CD4-positive, alpha-beta memory T cell (primary cell): ENCODE measurements at regions of chr6 and their contacts with region 1.

Region 1: DNA sequence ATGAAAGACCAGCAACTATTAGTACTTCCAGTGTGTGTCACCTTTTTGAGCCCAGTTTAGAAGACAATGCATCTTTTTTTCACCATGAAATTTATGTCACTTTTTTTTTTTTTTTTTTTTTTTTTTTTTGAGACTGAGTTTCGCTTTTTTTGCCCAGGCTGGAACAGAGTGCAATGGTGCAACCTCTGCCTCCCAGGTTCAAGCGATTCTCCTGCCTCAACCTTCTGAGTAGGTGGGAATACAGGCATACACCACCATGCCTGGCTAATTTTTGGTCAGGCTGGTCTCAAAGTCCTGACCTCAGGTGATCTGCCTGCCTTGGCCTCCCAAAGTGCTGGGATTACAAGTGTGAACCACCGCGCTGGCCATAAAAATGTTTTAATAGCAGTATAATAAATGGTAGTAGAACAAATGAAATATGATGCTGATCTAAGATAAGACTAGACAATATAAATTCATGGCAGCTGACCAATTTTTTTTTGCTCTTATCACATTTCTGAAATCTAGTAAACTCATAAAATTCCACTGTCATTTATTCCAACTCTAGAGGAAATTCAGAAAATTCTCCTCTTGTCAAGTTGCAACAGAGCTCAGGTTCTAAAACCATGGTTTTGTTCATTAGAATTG is 21.3 kb downstream of the NHSL1 start:
- DNase-seq: no peak
- H3K4me3 ChIP-seq: no peak overlapping the region
- H3K4me3 Mint-ChIP-seq: no peak overlapping the region
- H3K27ac ChIP-seq: no peak overlapping the region
- H3K27ac Mint-ChIP-seq: no peak overlapping the region
- H3K4me1 ChIP-seq: no peaks in the 10 kb centered on the region
- H3K4me1 Mint-ChIP-seq: no peaks in the 10 kb centered on the region
- H3K27me3 ChIP-seq: no peaks in the 10 kb centered on the region
- H3K27me3 Mint-ChIP-seq: no peaks in the 10 kb centered on the region

Region 2: DNA sequence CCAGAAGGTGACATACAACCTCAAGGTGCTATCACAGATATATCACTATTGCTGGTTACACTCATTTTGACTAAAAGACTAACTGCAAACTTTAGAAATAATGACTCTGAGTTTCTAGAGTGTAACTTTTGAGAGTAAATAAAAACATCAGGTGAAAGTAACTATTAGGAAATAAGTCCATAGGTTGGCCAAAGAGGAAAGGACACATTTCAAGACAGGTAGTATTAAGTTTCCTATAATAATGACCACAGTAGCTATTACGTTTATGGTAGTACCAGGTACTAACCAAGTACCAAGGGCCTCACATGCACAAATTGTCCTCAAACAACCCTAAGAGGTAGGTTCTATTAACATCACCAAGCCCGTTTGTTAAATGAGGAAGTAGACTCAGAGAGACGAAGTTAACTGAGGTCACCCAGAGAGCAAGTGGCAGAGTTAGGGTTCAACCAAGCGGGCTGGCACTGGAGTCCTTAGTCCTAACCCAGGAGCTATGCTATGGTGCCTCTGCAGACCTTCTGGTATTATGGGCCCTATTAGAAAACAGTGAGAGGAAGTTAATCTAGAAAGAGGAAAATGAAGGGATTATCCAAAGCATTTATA is 37.2 kb before region 1 on chr6:
- CTCF ChIA-PET with region 1: interaction called, 3 read pairs
- POLR2A ChIA-PET with region 1: no interaction called
- intact Hi-C with region 1: loop called (anchors 5 kb)
- DNase-seq: no peak
- H3K4me3 ChIP-seq: no peak overlapping the region
- H3K4me3 Mint-ChIP-seq: no peak overlapping the region
- H3K27ac ChIP-seq: no peak overlapping the region
- H3K27ac Mint-ChIP-seq: no peak overlapping the region
- H3K4me1 ChIP-seq: no peaks in the 10 kb centered on the region
- H3K4me1 Mint-ChIP-seq: no peaks in the 10 kb centered on the region
- H3K27me3 ChIP-seq: no peaks in the 10 kb centered on the region
- H3K27me3 Mint-ChIP-seq: no peaks in the 10 kb centered on the region